Activated CD8-positive, alpha-beta T cell treated with anti-CD3 and anti-CD28 coated beads for 36 hours (primary cell): ENCODE measurements at regions of chr14 and their contacts with region 1.

Region 1: GRCh38 chr14:93939304-93940229 is 12.4 kb downstream of the FAM181A start:
- DNase-seq: peak; percentile 93
- ATAC-seq: peak; percentile 95
- H3K4me3 Mint-ChIP-seq: peak overlapping the region; percentile 49
- H3K27ac Mint-ChIP-seq: peak overlapping the region; percentile 34
- H3K4me1 Mint-ChIP-seq: peaks cover 12% of the 10 kb centered on the region
- H3K27me3 Mint-ChIP-seq: peaks cover 20% of the 10 kb centered on the region
- CTCF ChIP-seq: peak; percentile 99

Region 2: GRCh38 chr14:93970549-93970946 is 31.0 kb after region 1 on chr14:
- CTCF ChIA-PET with region 1: interaction called, 290 read pairs
- POLR2A ChIA-PET with region 1: interaction called, 9 read pairs
- intact Hi-C with region 1: loop called (anchors 5 kb)
- DNase-seq: peak; percentile 80
- ATAC-seq: peak; percentile 78
- H3K4me3 Mint-ChIP-seq: peak overlapping the region; percentile 76
- H3K27ac Mint-ChIP-seq: peak overlapping the region; percentile 95
- H3K4me1 Mint-ChIP-seq: peaks cover 67% of the 10 kb centered on the region
- H3K27me3 Mint-ChIP-seq: no peaks in the 10 kb centered on the region
- CTCF ChIP-seq: peak; percentile 80

Region 3: DNA sequence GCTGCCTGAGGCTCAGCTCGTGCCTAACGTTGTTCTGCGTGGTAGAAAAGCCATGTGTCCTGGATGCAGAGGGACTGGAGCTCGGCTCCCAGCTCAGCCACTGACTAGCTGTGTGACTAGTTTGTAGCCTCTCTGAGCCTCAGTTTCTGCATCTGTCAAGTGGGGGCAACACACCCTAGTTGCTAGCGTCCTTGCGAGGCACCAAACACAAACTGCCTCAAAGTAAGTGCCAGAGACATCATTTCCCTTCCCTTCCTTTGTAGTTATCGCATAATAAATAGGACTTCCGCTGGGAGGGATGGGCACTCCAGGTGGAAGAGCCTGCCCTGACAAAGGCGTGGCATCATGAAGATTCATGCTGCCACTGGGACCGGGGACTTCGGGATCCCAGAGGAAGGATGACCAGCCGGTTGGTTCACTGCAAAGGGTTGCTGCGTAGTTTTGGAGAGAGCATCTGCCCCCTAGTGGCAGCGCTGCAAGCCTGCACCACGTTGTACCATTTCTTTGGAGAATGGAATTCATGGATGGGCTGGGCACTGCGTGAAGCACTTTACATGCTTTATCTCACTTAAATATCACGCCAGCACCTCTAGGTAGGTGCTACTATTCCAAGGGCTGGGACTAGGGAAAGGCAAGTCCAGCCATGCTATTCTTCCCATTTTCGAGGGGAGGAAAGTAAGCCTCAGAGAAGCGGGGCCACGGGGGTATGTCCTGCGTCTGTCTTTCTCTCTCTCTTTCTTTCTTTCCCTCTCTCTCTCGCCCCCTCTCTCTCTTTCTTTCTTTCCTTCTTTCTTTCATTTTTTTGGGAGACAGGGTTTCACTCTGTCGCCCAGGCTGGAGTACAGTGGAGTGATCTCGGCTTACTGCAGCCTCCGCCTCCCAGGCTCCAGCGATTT is 62.2 kb after region 1 on chr14:
- CTCF ChIA-PET with region 1: interaction called, 437 read pairs
- POLR2A ChIA-PET with region 1: interaction called, 6 read pairs
- intact Hi-C with region 1: loop called (anchors 2 kb)
- DNase-seq: peak; percentile 64
- ATAC-seq: peak; percentile 81
- H3K4me3 Mint-ChIP-seq: no peak overlapping the region
- H3K27ac Mint-ChIP-seq: peak overlapping the region; percentile 50
- H3K4me1 Mint-ChIP-seq: peaks cover 20% of the 10 kb centered on the region
- H3K27me3 Mint-ChIP-seq: peaks cover 12% of the 10 kb centered on the region
- CTCF ChIP-seq: peak; percentile 96

Region 4: DNA sequence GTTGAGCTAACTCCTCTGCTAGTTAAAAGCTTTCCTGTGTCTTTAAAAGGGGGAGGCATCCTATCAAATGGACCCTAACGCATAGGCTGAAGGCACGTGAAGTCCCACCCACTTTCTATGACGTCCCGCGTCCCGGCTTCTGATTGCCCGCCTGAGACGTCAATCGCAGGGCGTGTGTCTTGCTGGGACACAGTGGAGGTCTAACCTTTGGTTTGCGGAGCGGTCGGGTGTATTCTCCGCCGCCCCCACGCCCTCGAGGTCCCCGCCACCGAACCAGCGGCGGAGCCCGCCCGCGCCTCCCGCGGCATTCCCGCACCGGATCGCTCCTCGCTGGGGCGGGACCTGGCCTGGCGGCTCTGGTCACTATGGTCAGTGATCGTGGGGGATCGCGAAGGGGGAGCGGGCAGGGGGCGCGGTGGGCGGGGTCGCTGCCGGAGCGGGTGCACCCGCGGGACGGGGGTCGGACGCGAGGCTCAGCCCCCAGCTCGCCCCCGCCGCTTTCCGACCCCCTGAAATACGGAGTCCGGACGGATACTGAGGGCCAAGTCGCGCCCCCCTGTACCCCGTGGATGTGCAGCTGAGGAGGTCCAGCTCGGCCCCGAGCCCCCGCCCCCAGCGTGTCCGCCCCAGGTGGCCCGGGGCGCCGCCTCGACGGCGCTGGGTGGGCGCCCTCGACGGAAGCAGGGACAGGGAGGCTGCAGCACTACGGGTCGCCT is 86.8 kb after region 1 on chr14 and contains the start of gene OTUB2:
- CTCF ChIA-PET with region 1: interaction called, 65 read pairs
- POLR2A ChIA-PET with region 1: interaction called, 4 read pairs
- intact Hi-C with region 1: no loop called
- DNase-seq: peak; percentile 98
- ATAC-seq: peak; percentile 96
- H3K4me3 Mint-ChIP-seq: peak within 1 kb of the TSS; percentile 42
- H3K27ac Mint-ChIP-seq: no peak within 1 kb of the TSS
- H3K4me1 Mint-ChIP-seq: peaks cover 40% of the 10 kb centered on the region
- H3K27me3 Mint-ChIP-seq: peaks cover 1% of the 10 kb centered on the region
- CTCF ChIP-seq: no peak
- total RNA-seq, gene OTUB2: 0.25 to 0.29 TPM

Region 5: GRCh38 chr14:94080471-94081289 is 141.1 kb after region 1 on chr14 and contains the start of gene DDX24:
- CTCF ChIA-PET with region 1: interaction called, 29 read pairs
- POLR2A ChIA-PET with region 1: no interaction called
- intact Hi-C with region 1: no loop called
- DNase-seq: peak; percentile 98
- ATAC-seq: peak; percentile 98
- H3K4me3 Mint-ChIP-seq: peak within 1 kb of the TSS; percentile 98
- H3K27ac Mint-ChIP-seq: peak within 1 kb of the TSS; percentile 99
- H3K4me1 Mint-ChIP-seq: peaks cover 44% of the 10 kb centered on the region
- H3K27me3 Mint-ChIP-seq: no peaks in the 10 kb centered on the region
- CTCF ChIP-seq: no peak
- total RNA-seq, gene DDX24: 272 to 275 TPM

Region 6: DNA sequence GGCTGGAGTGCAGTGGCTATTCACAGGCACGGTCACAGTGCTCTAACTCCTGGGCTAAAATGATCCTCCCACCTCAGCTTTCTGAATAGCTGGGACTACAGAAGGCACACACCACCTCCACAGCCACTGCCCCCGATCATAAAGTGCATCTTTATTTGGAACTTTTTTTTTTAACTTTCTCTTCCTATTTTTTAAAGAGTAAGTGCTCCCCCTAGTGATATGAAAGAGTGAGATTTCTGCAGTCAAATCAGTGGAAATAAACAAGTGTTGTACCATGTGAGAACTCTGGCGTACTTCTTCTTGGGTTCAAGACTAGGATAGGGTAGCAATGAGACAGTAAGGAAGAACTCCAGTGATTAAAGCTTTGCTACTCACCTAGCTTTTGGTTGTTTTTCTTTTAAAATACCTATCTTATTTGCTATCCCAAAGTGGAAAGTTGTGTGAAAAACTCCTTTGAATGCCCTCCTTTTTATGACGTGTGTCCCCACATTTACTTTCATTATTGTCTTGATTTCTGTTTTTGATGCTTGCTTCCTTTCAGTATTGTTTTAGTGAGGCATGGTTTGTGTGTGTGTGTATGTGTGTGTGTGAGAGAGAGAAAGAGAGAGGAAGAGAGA is 241.2 kb after region 1 on chr14:
- CTCF ChIA-PET with region 1: interaction called, 14 read pairs
- POLR2A ChIA-PET with region 1: no interaction called
- intact Hi-C with region 1: no loop called
- DNase-seq: no peak
- ATAC-seq: peak; percentile 81
- H3K4me3 Mint-ChIP-seq: peak overlapping the region; percentile 47
- H3K27ac Mint-ChIP-seq: peak overlapping the region; percentile 5
- H3K4me1 Mint-ChIP-seq: peaks cover 13% of the 10 kb centered on the region
- H3K27me3 Mint-ChIP-seq: peaks cover 19% of the 10 kb centered on the region
- CTCF ChIP-seq: peak; percentile 73